ENCODE measurements at regions of chr5 and their contacts with region 1.

Region 1: DNA sequence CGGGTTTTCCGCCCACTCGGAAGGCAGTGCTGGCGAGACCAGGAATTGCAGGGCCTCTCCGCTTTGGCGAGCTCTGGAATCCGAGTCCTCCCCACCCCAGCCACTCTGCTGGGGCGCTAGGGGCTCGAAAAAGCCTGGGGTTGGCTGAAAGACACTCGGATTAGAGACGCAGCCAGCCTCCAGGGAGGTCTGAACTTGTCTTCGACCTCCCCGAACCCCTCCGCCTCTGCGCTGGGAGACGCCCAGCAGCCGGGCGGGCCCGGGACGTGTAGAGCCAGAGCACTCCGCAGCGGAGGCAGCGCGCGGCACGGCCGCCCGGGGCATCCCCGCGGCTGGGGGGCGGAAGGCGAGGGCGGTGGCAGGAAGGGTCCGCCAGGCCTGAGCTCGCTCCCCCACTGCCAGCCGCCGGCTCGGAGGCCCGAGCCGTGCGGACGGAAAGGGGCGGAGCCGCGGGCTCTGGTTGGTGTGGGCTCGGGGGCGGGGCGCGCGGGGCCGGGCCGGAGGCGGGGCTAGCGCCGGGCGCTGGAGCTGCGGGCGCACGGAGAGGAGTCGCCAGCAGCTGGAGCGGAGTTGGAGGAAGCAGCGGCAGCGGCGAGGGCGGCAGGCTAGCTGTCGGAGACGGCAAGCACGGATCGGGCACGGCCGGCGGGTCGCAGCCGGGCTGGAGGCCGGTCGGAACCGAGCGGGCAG is at the start of gene PIK3R1:
- DNase-seq: peak; percentile 81 to 97
- H3K4me3 ChIP-seq: peak within 1 kb of the TSS; percentile 91 to 99
- H3K27ac ChIP-seq: peak within 1 kb of the TSS; percentile 96
- H3K4me1 ChIP-seq: peaks cover 0 to 5% of the 10 kb centered on the region in 2 donors
- H3K27me3 ChIP-seq: no peaks in the 10 kb centered on the region
- CTCF ChIP-seq: peak; percentile 45 to 51 (median 46)
- total RNA-seq, gene PIK3R1: 89.3 TPM

Region 2: DNA sequence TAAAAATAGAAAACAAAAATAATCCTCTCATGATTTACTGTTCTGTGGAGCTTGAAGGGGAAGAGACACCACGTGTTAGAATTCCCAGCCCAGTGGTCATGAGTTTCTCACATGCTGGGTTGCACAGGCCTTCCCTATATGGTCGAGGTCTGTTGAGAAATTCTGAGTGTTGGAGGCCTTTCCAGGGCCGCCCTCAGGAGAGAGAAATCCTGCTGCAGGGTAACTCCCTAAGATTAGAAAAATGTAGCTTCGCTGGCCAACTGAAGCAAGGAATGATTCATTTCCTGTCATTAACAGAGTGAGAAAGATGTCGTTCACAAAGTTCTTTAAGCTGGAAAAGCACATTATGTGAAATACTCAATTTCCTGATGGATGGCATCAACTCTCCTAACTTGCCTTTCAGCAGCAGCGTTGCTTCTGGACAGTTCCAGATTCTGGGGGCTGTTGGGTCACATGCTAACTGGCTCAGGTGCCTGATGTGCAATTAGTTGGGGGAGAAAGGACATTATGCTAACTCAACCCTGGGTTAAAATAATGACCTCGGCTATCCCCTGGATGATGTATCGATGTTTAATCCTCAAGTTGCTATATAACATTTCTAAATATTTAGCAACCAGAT is 914.0 kb before region 1 on chr5:
- intact Hi-C with region 1: loop called (anchors 2 kb)
- DNase-seq: peak; percentile 63 to 94
- H3K4me3 ChIP-seq: no peak overlapping the region
- H3K27ac ChIP-seq: peak overlapping the region; percentile 75 to 89
- H3K4me1 ChIP-seq: peaks cover 7 to 28% of the 10 kb centered on the region in 2 donors
- H3K27me3 ChIP-seq: no peaks in the 10 kb centered on the region
- CTCF ChIP-seq: no peak

Region 3: DNA sequence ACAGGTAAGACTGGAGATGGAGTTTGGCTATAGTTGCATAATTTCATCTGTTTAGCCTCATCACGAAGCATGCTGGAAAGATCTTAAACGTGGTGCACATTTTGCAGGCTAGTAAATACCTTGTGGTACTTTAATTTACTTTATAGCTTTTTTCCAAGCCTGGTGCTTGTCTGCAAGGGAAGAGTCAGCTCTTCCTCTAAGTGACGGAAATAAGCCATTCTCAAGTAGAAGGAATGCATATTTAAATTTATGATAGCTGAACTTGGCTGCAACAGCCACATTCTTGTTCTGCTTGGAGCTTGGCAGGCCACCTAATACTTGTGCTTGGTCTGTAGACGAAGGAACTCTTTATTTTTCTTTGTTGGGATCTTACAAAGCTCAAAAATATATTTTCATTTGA is 187.8 kb before region 1 on chr5:
- intact Hi-C with region 1: loop called (anchors 5 kb)
- DNase-seq: no peak
- H3K4me3 ChIP-seq: no peak overlapping the region
- H3K27ac ChIP-seq: peak overlapping the region; percentile 29 to 67
- H3K4me1 ChIP-seq: peaks cover 0 to 24% of the 10 kb centered on the region in 2 donors
- H3K27me3 ChIP-seq: no peaks in the 10 kb centered on the region
- CTCF ChIP-seq: no peak

Region 4: DNA sequence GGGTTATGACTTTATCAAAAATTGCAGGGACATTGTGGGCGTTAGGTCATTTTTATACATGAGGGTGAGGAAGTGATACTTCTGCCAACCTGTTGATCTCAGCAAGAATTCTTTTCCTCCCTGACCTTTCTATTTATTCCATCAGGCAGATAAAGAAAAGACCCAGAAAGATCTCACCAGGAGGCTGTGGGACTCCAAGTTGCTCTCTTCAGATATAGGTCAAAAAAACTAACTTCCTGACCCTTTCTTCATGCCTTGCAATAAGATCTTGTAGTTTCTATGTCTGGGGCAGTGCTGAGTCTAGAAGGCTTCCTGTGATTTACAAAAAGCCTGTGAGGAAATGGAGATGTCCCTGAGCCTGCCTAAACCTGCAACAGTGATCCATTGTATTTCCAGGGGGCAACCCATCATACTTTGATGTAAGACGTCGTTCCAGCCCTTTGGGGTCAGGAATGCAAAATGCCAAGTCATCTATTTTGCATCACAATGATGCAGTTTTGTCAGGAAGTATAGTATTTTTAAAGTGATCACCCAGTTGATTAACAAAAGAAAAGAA is 21.8 kb before region 1 on chr5:
- intact Hi-C with region 1: loop called (anchors 2 kb)
- DNase-seq: no peak
- H3K4me3 ChIP-seq: no peak overlapping the region
- H3K27ac ChIP-seq: peak overlapping the region; percentile 75 to 76
- H3K4me1 ChIP-seq: peaks cover 0 to 25% of the 10 kb centered on the region in 2 donors
- H3K27me3 ChIP-seq: no peaks in the 10 kb centered on the region
- CTCF ChIP-seq: no peak

Region 5: GRCh38 chr5:68268101-68268851 is 52.9 kb after region 1 on chr5:
- intact Hi-C with region 1: loop called (anchors 5 kb)
- DNase-seq: no peak
- H3K4me3 ChIP-seq: peak overlapping the region; percentile 27 to 47
- H3K27ac ChIP-seq: peak overlapping the region; percentile 84 to 86
- H3K4me1 ChIP-seq: peaks cover 21 to 85% of the 10 kb centered on the region in 2 donors
- H3K27me3 ChIP-seq: no peaks in the 10 kb centered on the region
- CTCF ChIP-seq: no peak

Region 6: DNA sequence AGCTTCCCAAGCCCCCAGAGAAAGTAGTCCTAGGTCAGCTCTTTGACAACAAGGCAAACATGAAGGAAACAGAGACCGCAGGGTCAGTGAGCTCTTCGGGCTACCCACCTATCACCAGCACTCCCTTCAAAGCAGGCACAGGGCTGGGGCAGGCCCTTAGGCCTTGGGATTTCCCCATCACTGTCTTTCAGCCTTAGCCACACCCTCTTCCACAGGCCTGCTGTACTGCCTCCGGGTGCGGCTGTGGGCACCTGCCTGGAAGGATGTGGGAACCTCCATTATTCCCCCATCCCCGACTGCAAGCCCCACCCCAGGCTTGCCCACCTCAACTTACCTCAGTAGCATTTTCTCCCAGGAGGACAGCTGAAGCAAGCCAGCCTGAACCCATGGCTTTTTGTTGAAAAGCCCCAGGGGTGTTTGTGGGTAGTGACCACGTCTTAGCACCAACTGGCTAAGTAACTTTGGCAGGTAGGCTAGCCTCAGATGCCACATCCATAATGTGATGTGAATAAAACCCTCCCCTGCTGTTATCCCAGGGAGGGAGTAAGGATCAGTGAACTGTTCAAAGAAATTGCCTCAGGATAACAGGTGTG is 100.4 kb after region 1 on chr5:
- intact Hi-C with region 1: no loop called
- DNase-seq: no peak
- H3K4me3 ChIP-seq: no peak overlapping the region
- H3K27ac ChIP-seq: no peak overlapping the region
- H3K4me1 ChIP-seq: no peaks in the 10 kb centered on the region
- H3K27me3 ChIP-seq: no peaks in the 10 kb centered on the region
- CTCF ChIP-seq: no peak

Region 7: GRCh38 chr5:68446487-68446894 is 231.1 kb after region 1 on chr5:
- intact Hi-C with region 1: no loop called
- DNase-seq: no peak
- H3K4me3 ChIP-seq: no peak overlapping the region
- H3K27ac ChIP-seq: no peak overlapping the region
- H3K4me1 ChIP-seq: peaks cover 0 to 16% of the 10 kb centered on the region in 2 donors
- H3K27me3 ChIP-seq: no peaks in the 10 kb centered on the region
- CTCF ChIP-seq: no peak

Measured in ascending aorta (tissue), 2 donors.